BJ (cell line): ENCODE measurements at regions of chr1 and their contacts with region 1.

Region 1: GRCh38 chr1:37807555-37808368 is at the starts of genes C1orf122 and YRDC:
- DNase-seq: no peak
- H3K4me3 ChIP-seq: peak within 1 kb of the TSS; percentile 68
- H3K27me3 ChIP-seq: no peaks in the 10 kb centered on the region
- CTCF ChIP-seq: no peak
- polyA plus RNA-seq, gene C1orf122: 30.9 and 34.1 TPM in 2 replicates
- polyA plus RNA-seq, gene YRDC: 15.1 and 19.8 TPM in 2 replicates

Region 2: DNA sequence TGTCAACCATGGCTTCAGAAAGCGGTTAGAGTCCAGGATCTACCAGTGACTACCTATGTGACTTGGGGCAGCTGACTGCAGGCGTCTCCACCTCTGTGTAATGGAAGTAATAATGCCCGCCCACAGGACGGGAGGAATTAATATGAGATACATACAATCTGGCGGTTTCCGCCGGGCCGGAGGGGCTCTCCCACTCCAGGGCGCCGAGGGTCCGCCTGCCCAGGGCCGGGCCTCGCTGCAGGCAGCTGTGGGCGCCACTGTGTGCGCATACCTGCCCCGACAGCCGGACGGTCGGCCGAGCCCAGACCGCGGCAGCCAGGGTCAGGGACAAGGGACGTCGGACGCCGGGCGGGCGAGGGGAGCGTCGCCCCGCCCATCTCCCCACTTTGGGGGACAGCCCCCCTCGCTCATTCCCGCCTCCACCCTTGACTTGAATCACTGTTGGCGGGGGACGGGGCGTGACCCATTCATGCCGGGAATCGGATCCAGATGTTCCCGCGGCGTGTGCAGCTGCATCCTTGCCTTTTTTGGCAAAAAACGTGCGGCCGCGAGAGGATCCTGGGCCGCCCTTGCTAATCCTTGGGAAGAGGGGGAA is 188.1 kb after region 1 on chr1:
- CTCF ChIA-PET with region 1: interaction called, 3 read pairs
- POLR2A ChIA-PET with region 1: interaction called, 22 read pairs
- DNase-seq: no peak
- H3K4me3 ChIP-seq: peak overlapping the region; percentile 41
- H3K27me3 ChIP-seq: no peaks in the 10 kb centered on the region
- CTCF ChIP-seq: no peak

Region 3: DNA sequence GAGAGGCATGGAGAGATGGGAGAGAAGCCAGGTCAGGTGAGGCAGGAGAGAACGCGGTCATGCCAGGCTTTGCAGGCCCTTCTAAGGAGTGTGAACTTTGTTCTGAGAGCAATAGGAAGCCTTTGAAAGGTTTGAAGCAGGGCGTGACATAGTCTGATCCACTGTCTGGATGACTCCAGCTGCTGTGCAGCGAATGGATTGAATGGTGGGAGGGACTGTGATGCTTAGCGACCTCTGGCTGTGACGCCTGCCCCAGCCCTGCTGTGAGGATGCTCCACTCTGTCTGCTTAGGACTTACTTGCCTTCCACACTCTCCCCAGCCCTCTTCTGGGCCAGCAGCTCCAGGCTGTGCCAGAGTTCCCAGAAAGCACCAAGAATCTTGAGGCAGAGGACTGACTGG is 280.6 kb after region 1 on chr1:
- CTCF ChIA-PET with region 1: no interaction called
- POLR2A ChIA-PET with region 1: no interaction called
- DNase-seq: no peak
- H3K4me3 ChIP-seq: no peak overlapping the region
- H3K27me3 ChIP-seq: peaks cover 1% of the 10 kb centered on the region
- CTCF ChIP-seq: no peak